ENCODE measurements at regions of chr11 and their contacts with region 1.

Region 1: GRCh38 chr11:95150946-95151684 is 61.5 kb downstream of the ENDOD1 start:
- DNase-seq: peak; percentile 83 to 96 (median 91)
- ATAC-seq: peak; percentile 94
- H3K4me3 ChIP-seq: peak overlapping the region; percentile 64 to 82
- H3K4me3 Mint-ChIP-seq: peak overlapping the region; percentile 85
- H3K27ac ChIP-seq: peak overlapping the region; percentile 66 to 69
- H3K27ac Mint-ChIP-seq: peak overlapping the region; percentile 91
- H3K4me1 ChIP-seq: peaks cover 24% of the 10 kb centered on the region
- H3K4me1 Mint-ChIP-seq: peaks cover 35% of the 10 kb centered on the region
- H3K27me3 ChIP-seq: no peaks in the 10 kb centered on the region
- H3K27me3 Mint-ChIP-seq: peaks cover 4% of the 10 kb centered on the region
- CTCF ChIP-seq: peak; percentile 92

Region 2: DNA sequence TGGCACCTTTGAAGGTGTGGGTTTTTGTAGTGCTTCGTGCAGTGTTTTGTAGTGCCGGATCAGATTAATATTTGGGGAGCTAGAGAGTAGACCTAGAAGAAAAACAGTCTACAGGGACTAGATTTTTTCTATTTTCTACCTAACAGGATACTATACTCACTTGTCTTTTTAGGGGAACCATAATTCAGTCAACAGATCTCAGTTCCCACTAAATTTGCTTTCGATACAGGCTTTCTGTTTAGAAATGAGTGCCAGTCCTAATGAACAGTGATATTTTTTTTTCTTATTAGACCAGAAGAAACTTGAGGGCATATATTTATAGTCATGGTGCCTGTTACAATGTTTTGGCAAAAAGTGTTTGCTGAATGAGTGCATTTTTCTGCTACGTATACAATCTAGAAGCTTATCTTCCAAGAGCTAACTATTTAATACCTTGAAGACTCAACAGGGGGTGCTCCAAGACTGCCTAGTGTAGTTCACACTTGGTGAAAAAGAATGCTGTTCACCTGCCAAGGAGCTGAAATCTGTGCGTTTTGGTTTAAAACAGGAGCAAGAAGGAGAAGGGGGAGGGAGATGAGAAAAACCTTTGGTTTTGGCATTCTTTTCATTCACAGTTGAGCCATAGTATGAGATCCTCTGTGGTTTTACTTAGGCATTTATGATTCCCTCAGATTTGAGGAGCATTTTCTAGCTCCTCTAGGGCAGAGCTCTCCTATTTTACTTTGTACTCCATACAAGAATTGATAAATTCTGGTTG is 1255.8 kb before region 1 on chr11:
- CTCF ChIA-PET with region 1: no interaction called
- POLR2A ChIA-PET with region 1: no interaction called
- intact Hi-C with region 1: loop called in 1 of 2 experiments (anchors 10 kb)
- DNase-seq: peak in 3 of 9 experiments; percentile 10 to 52 (median 44)
- ATAC-seq: no peak
- H3K4me3 ChIP-seq: no peak overlapping the region
- H3K4me3 Mint-ChIP-seq: no peak overlapping the region
- H3K27ac ChIP-seq: no peak overlapping the region
- H3K27ac Mint-ChIP-seq: no peak overlapping the region
- H3K4me1 ChIP-seq: no peaks in the 10 kb centered on the region
- H3K4me1 Mint-ChIP-seq: no peaks in the 10 kb centered on the region
- H3K27me3 ChIP-seq: peaks cover 0 to 2% of the 10 kb centered on the region in 2 experiments
- H3K27me3 Mint-ChIP-seq: peaks cover 41% of the 10 kb centered on the region
- CTCF ChIP-seq: peak; percentile 30

Region 3: GRCh38 chr11:94623120-94623735 is 527.9 kb before region 1 on chr11:
- CTCF ChIA-PET with region 1: interaction called, 7 read pairs
- POLR2A ChIA-PET with region 1: no interaction called
- intact Hi-C with region 1: loop called (anchors 5 kb)
- DNase-seq: peak in 6 of 9 experiments; percentile 19 to 67 (median 30)
- ATAC-seq: peak; percentile 68
- H3K4me3 ChIP-seq: no peak overlapping the region
- H3K4me3 Mint-ChIP-seq: no peak overlapping the region
- H3K27ac ChIP-seq: no peak overlapping the region
- H3K27ac Mint-ChIP-seq: no peak overlapping the region
- H3K4me1 ChIP-seq: no peaks in the 10 kb centered on the region
- H3K4me1 Mint-ChIP-seq: peaks cover 3% of the 10 kb centered on the region
- H3K27me3 ChIP-seq: no peaks in the 10 kb centered on the region
- H3K27me3 Mint-ChIP-seq: peaks cover 11% of the 10 kb centered on the region
- CTCF ChIP-seq: peak; percentile 41

Region 4: DNA sequence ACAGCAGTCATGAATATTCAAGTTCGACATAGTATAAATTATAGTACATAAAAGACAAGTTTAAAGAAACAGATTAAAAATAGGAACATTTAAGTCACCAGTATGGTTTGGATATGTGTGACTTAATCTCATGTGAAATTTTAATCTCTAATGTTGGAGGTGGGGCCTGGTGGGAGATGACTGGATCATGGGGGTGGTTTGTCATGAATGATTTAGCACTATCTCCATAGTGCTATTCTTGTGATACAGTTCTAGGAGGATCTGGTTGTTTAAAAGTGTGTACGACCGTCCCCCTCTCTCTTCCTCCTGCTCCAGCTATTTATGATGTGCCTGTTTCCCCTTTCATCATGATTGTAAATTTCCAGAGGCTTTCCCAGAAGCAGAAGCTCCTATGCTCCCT is 122.8 kb before region 1 on chr11:
- CTCF ChIA-PET with region 1: no interaction called
- POLR2A ChIA-PET with region 1: no interaction called
- intact Hi-C with region 1: no loop called
- DNase-seq: no peak
- ATAC-seq: no peak
- H3K4me3 ChIP-seq: no peak overlapping the region
- H3K4me3 Mint-ChIP-seq: no peak overlapping the region
- H3K27ac ChIP-seq: no peak overlapping the region
- H3K27ac Mint-ChIP-seq: no peak overlapping the region
- H3K4me1 ChIP-seq: no peaks in the 10 kb centered on the region
- H3K4me1 Mint-ChIP-seq: no peaks in the 10 kb centered on the region
- H3K27me3 ChIP-seq: no peaks in the 10 kb centered on the region
- H3K27me3 Mint-ChIP-seq: peaks cover 4% of the 10 kb centered on the region
- CTCF ChIP-seq: no peak

Region 5: GRCh38 chr11:95163106-95163505 is 12.0 kb after region 1 on chr11:
- CTCF ChIA-PET with region 1: interaction called, 18 read pairs
- POLR2A ChIA-PET with region 1: no interaction called
- intact Hi-C with region 1: no loop called
- DNase-seq: no peak
- ATAC-seq: no peak
- H3K4me3 ChIP-seq: no peak overlapping the region
- H3K4me3 Mint-ChIP-seq: no peak overlapping the region
- H3K27ac ChIP-seq: no peak overlapping the region
- H3K27ac Mint-ChIP-seq: peak overlapping the region; percentile 41
- H3K4me1 ChIP-seq: peaks cover 2% of the 10 kb centered on the region
- H3K4me1 Mint-ChIP-seq: peaks cover 15% of the 10 kb centered on the region
- H3K27me3 ChIP-seq: no peaks in the 10 kb centered on the region
- H3K27me3 Mint-ChIP-seq: no peaks in the 10 kb centered on the region
- CTCF ChIP-seq: no peak

Region 6: GRCh38 chr11:95764267-95764898 is 613.3 kb after region 1 on chr11:
- CTCF ChIA-PET with region 1: interaction called, 229 read pairs
- POLR2A ChIA-PET with region 1: interaction called, 4 read pairs
- intact Hi-C with region 1: loop called (anchors 1 kb)
- DNase-seq: peak in 2 of 9 experiments; percentile 61 to 73
- ATAC-seq: peak; percentile 86
- H3K4me3 ChIP-seq: no peak overlapping the region
- H3K4me3 Mint-ChIP-seq: no peak overlapping the region
- H3K27ac ChIP-seq: no peak overlapping the region
- H3K27ac Mint-ChIP-seq: no peak overlapping the region
- H3K4me1 ChIP-seq: no peaks in the 10 kb centered on the region
- H3K4me1 Mint-ChIP-seq: no peaks in the 10 kb centered on the region
- H3K27me3 ChIP-seq: peaks cover 0 to 2% of the 10 kb centered on the region in 2 experiments
- H3K27me3 Mint-ChIP-seq: peaks cover 5% of the 10 kb centered on the region
- CTCF ChIP-seq: peak; percentile 88

Region 7: DNA sequence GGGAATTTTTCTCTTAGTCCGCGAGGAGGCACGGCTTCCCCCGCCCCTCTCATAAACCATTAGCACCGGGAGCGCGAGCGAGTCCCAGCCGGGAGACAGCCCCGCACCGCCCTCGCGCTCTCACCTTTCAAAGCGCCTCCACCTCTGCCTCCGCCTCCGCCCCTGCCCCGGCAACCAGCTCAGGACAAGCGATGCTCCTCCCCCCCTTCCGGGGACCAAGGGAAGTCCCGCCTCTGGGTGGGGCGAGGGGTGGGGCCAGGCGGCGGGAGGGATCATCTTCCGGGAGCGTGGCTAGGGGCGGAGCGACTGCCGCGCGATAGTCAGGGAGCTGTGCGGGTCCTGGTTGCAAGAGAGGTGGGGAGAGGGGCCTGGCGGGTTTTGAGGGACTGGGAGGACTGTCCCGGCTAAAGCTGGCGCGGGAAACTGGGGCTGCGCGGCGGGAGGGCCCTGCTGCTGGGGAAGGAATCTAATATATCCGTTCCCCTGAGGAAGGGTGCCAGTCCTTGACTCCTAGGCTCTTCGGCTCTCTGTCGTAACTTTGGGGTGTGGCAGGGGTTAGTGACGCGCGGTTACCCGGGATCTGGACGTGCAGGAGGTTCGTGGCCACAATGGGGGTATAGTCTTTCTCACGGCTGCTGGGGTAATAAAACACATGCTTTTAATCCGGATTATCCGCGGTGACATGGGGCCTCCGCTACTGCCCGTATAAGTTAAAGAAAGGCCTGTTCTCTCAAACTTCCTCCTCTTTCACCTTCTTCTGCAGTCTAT is 1238.8 kb after region 1 on chr11 and contains the starts of genes CCDC82 and JRKL:
- CTCF ChIA-PET with region 1: interaction called, 3 read pairs
- POLR2A ChIA-PET with region 1: no interaction called
- intact Hi-C with region 1: loop called (anchors 2 to 10 kb)
- DNase-seq: peak; percentile 96 to 99 (median 98)
- ATAC-seq: peak; percentile 97
- H3K4me3 ChIP-seq: peak within 1 kb of the TSS; percentile 87 to 93
- H3K4me3 Mint-ChIP-seq: peak within 1 kb of the TSS; percentile 94
- H3K27ac ChIP-seq: peak within 1 kb of the TSS; percentile 78 to 79
- H3K27ac Mint-ChIP-seq: peak within 1 kb of the TSS; percentile 96
- H3K4me1 ChIP-seq: peaks cover 15% of the 10 kb centered on the region
- H3K4me1 Mint-ChIP-seq: peaks cover 52% of the 10 kb centered on the region
- H3K27me3 ChIP-seq: no peaks in the 10 kb centered on the region
- H3K27me3 Mint-ChIP-seq: no peaks in the 10 kb centered on the region
- CTCF ChIP-seq: no peak
- total RNA-seq, gene CCDC82: 20.0 to 23.0 TPM
- total RNA-seq, gene JRKL: 2.5 to 2.6 TPM